Psoas muscle (tissue), 8 donors: ENCODE measurements at regions of chr13 and their contacts with region 1.

Region 1: DNA sequence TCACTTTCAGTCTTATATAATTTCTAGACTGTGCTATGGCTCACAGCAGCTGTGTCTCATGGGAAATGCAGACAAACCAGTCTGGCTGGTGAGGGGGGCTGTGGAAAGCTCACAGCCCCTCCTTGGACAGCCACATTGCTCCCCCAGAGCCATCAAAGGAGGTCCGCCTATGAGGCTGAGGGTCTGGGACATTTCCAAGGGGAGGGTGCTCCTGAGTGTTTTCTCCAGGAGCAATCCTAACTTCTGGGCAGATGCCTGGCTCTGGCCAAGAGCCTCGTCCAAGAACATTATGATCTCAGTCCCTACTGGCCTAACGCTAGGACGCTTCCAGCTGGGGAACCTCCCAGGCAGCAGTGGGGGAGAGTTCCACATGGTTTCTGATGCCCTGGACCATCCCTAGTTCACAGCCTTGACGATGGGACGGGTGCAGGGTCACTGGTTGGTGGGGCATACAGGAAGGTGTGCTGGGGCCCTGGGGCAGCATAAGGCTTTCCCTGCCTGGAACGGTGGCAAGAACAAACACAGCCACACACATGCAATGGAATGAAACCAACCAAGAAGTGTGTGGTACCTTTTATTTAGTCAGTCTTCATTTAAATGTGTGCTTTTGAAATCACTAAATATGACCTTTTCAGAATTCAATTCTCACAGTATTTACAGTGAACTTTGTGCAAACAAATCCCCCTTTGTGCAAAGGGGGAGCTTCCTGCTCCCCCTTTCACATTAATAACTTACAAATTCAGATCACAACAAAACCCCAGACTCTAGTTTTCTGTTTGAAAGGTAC is 60.6 kb downstream of the CDADC1 start:
- DNase-seq: peak; percentile 85 to 91
- ATAC-seq: peak; percentile 60 to 88 (median 85)
- H3K4me3 ChIP-seq: no peak overlapping the region
- H3K27ac ChIP-seq: peak overlapping the region; percentile 54
- H3K4me1 ChIP-seq: peaks cover 11% of the 10 kb centered on the region
- H3K27me3 ChIP-seq: peaks cover 0 to 3% (median 0%) of the 10 kb centered on the region in 3 donors
- CTCF ChIP-seq: no peak

Region 2: DNA sequence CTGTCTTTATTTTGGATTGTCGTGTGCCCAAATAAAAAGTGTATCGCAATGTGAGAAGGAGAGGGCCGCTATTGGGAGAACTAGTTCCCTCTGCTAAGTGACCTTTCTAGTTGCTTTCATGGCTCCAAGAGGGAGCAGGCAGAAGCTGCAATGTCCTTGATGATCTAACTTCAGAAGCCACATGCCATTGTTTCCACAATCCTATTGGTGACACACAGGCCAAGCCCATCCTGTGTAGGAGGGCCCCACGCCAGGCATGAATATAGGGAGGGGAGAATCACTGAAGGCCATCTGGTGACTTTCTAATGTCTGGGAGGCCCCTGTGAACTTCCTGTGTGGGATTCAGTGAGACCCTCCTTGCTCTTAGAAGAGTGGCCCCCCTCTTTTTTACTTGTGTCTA is 532.0 kb after region 1 on chr13:
- intact Hi-C with region 1: loop called (anchors 5 to 10 kb)
- DNase-seq: no peak
- ATAC-seq: no peak
- H3K4me3 ChIP-seq: no peak overlapping the region
- H3K27ac ChIP-seq: no peak overlapping the region
- H3K4me1 ChIP-seq: no peaks in the 10 kb centered on the region
- H3K27me3 ChIP-seq: no peaks in the 10 kb centered on the region
- CTCF ChIP-seq: no peak